ENCODE measurements at regions of chrX and their contacts with region 1.

Region 1: DNA sequence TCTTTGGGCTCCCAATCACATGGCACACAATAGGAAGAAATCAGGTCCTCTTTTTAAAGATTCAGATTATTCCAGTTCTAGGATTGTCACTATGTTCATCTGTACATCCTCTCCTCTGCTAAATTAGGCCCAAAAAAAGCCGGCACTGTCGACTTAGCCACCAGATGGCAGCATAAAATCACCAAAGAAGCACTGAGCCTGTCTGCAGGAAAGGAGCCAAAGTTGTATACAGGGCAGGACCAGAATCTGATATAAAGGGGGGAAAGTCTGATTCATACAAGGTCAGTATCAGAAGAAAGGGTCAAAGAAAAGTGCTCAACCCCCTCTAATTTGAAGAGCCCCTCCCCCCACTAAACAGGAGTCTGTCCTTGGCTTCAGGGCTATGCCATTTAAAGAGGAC is 292.5 kb downstream of the CHIC1 start:
- DNase-seq: peak in 1 of 2 donors; percentile 85
- H3K4me3 ChIP-seq: no peak overlapping the region
- H3K27ac ChIP-seq: no peak overlapping the region
- H3K4me1 ChIP-seq: no peaks in the 10 kb centered on the region
- H3K27me3 ChIP-seq: no peaks in the 10 kb centered on the region
- CTCF ChIP-seq: peak; percentile 54 to 83 (median 75)

Region 2: DNA sequence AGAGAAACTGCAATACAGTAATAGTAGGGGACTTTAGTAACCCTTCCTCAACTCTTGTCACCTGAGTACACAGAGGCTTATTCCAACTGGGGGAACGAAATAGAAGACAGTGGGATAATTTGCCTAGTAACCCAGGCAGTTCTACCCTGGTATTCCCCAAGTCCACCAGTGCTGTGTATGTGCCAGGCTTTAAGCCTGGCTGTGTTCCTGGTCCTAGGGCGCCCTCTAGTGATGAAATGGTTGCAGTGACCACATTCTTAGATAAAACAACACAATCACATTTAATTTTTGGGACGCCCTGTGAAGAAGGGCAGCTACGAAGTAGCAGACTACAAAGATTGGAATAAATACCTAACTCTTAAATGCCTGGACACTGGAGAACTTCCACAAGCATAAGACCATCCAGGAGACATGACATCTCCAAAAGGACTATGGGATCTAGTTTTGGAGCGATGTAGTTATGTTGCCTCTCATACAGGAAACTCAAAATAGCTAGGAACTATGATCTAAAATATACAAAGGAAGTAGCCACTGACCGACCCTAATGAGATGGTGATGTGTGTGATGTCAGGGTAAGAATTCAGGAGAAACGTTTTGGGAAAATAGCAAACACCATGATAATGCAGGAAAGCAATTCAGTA is 160.0 kb after region 1 on chrX:
- intact Hi-C with region 1: loop called (anchors 1 kb)
- DNase-seq: peak in 1 of 2 donors; percentile 73
- H3K4me3 ChIP-seq: no peak overlapping the region
- H3K27ac ChIP-seq: no peak overlapping the region
- H3K4me1 ChIP-seq: no peaks in the 10 kb centered on the region
- H3K27me3 ChIP-seq: no peaks in the 10 kb centered on the region
- CTCF ChIP-seq: peak; percentile 66 to 78 (median 72)

Region 3: GRCh38 chrX:74133156-74133796 is 277.7 kb after region 1 on chrX:
- intact Hi-C with region 1: loop called (anchors 1 kb)
- DNase-seq: no peak
- H3K4me3 ChIP-seq: no peak overlapping the region
- H3K27ac ChIP-seq: no peak overlapping the region
- H3K4me1 ChIP-seq: no peaks in the 10 kb centered on the region
- H3K27me3 ChIP-seq: no peaks in the 10 kb centered on the region
- CTCF ChIP-seq: peak; percentile 64 to 76 (median 69)

Region 4: DNA sequence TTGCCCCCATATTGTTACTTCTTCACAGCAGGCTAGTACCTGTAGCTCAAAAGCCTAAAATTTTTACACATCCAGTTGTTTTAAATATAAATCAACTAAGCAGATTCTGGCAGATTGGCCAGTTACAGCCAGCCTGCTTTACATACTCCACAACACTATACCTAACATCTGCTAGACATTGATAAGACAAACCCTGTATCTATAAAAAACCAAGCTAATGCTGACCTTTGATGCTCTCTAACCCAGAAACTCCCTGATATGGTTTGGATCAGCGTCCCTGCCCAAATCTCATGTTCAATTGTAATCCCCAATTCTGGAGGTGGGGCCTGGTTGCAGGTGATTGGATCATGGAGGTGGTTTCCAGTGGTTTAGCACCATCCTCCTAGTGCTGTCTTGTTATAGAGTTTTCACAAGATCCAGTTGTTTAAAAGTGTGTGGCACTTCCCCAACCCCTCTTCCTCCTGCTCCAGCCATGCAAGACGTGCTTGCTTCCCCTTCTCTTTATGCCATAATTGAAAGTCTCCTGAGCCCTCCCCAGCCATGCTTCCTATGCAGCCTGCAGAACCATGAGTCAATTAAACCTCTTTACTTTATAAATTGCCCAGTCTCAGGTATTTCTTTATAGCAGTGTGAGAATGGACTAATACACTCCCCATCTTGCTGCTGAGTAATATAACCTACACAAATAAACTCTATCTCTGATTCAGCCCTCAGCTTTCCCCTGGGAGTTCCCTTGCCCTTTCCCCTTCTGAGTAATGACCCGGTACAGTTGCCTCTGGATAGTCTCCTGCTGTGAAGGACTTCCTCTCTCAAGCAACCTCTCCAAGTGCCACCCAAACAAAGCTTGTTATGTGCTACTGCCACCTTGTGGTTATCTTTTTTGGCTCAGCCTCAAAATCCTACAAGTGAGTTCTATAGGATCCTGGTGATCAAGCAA is 488.1 kb after region 1 on chrX:
- intact Hi-C with region 1: loop called (anchors 1 kb)
- DNase-seq: peak in 1 of 2 donors; percentile 77
- H3K4me3 ChIP-seq: no peak overlapping the region
- H3K27ac ChIP-seq: no peak overlapping the region
- H3K4me1 ChIP-seq: no peaks in the 10 kb centered on the region
- H3K27me3 ChIP-seq: no peaks in the 10 kb centered on the region
- CTCF ChIP-seq: peak; percentile 20 to 61 (median 34)

Region 5: DNA sequence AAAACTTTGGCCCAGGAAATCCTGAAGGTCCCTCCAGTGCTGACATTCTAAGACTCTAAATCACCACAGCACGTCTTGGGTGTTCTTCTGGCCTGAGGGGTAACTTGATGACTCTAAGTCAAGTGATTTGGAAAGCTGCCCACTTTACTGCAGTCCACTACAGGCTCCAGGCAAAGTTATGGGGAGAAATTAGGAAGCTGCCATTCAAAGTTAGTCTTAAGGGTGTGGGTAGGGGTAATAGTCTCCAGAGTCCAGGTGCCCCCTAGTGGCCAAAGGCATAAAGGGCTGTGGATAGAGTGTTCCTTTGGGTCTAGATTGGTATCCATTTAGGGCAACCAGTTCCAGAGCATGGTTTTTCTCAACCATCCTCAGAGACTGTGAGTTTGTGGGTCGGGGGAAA is 527.1 kb after region 1 on chrX:
- intact Hi-C with region 1: loop called (anchors 2 kb)
- DNase-seq: peak; percentile 11 to 82
- H3K4me3 ChIP-seq: no peak overlapping the region
- H3K27ac ChIP-seq: no peak overlapping the region
- H3K4me1 ChIP-seq: no peaks in the 10 kb centered on the region
- H3K27me3 ChIP-seq: no peaks in the 10 kb centered on the region
- CTCF ChIP-seq: peak; percentile 23 to 69 (median 64)

Region 6: GRCh38 chrX:74550295-74550802 is 694.8 kb after region 1 on chrX:
- intact Hi-C with region 1: loop called (anchors 2 kb)
- DNase-seq: peak; percentile 25 to 88
- H3K4me3 ChIP-seq: no peak overlapping the region
- H3K27ac ChIP-seq: no peak overlapping the region
- H3K4me1 ChIP-seq: no peaks in the 10 kb centered on the region
- H3K27me3 ChIP-seq: no peaks in the 10 kb centered on the region
- CTCF ChIP-seq: peak; percentile 93 to 97 (median 96)

Measured in ascending aorta (tissue), 2 donors.